ENCODE measurements at regions of chr12 and their contacts with region 1.

Region 1: GRCh38 chr12:29640589-29641345 is 143.0 kb downstream of the TMTC1 start:
- DNase-seq: peak; percentile 74
- ATAC-seq: peak; percentile 81
- H3K4me3 ChIP-seq: 0 out of 2 replicates have a peak overlapping the region, but pooled peaks have one; percentile 17
- H3K27ac ChIP-seq: peak overlapping the region; percentile 72
- H3K4me1 ChIP-seq: peaks cover 18% of the 10 kb centered on the region
- H3K27me3 ChIP-seq: peaks cover 3% of the 10 kb centered on the region
- CTCF ChIP-seq: peak; percentile 46

Region 2: DNA sequence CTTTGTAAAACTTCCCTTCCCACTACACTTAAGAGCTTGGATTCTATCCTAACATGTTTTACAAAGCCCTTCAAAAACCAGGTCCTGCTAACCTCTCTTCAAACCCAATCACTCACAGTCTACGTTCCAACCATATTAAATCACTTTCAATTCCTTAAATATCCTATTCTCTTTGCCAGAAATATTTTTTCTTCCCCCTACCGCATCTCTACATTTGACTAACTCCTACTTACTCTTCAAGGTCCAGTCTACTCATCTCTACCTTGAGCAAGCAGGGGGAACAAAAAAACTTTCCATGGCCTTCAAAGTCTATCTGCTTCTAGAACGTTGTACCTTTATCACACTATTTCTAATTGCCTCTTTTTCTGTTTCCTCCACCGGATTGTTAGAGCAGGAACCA is 265.9 kb before region 1 on chr12:
- CTCF ChIA-PET with region 1: no interaction called
- POLR2A ChIA-PET with region 1: no interaction called
- intact Hi-C with region 1: no loop called
- DNase-seq: no peak
- ATAC-seq: no peak
- H3K4me3 ChIP-seq: no peak overlapping the region
- H3K27ac ChIP-seq: no peak overlapping the region
- H3K4me1 ChIP-seq: peaks cover 15% of the 10 kb centered on the region
- H3K27me3 ChIP-seq: no peaks in the 10 kb centered on the region
- CTCF ChIP-seq: no peak

Region 3: GRCh38 chr12:29691141-29691854 is 50.5 kb after region 1 on chr12:
- CTCF ChIA-PET with region 1: no interaction called
- POLR2A ChIA-PET with region 1: interaction called, 24 read pairs
- intact Hi-C with region 1: no loop called
- DNase-seq: no peak
- ATAC-seq: no peak
- H3K4me3 ChIP-seq: no peak overlapping the region
- H3K27ac ChIP-seq: no peak overlapping the region
- H3K4me1 ChIP-seq: no peaks in the 10 kb centered on the region
- H3K27me3 ChIP-seq: peaks cover 17% of the 10 kb centered on the region
- CTCF ChIP-seq: no peak